BJ (cell line): ENCODE measurements at regions of chr14 and their contacts with region 1.

Region 1: GRCh38 chr14:75982266-75983018 is 647 bp upstream of the TGFB3 start:
- DNase-seq: no peak
- H3K4me3 ChIP-seq: peak overlapping the region; percentile 54
- H3K27me3 ChIP-seq: no peaks in the 10 kb centered on the region
- CTCF ChIP-seq: peak; percentile 72

Region 2: GRCh38 chr14:75702616-75703261 is 279.7 kb before region 1 on chr14:
- CTCF ChIA-PET with region 1: interaction called, 296 read pairs
- POLR2A ChIA-PET with region 1: interaction called, 4 read pairs
- DNase-seq: no peak
- H3K4me3 ChIP-seq: no peak overlapping the region
- H3K27me3 ChIP-seq: no peaks in the 10 kb centered on the region
- CTCF ChIP-seq: no peak

Region 3: DNA sequence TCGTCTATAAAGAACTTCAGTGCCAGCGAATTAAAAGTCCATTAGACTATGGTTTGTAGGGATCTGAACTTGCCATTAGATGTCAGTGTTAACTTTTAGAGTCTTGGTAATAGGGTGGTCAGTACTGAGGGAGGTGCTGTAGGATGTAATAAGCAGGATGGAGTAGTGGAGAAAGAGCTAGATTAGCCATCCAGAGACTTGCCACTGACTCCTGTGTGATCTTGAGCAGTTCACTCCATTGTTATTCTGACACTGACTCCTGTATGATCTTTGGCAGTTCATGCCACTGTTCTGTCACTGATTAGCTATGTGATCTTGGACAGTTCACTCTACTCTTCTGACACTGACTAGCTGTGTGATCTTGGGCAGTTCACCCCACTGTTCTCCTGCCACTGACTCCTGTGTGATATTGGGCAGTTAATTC is 187.8 kb before region 1 on chr14:
- CTCF ChIA-PET with region 1: interaction called, 105 read pairs
- POLR2A ChIA-PET with region 1: no interaction called
- DNase-seq: peak; percentile 10
- H3K4me3 ChIP-seq: no peak overlapping the region
- H3K27me3 ChIP-seq: no peaks in the 10 kb centered on the region
- CTCF ChIP-seq: peak; percentile 55

Region 4: GRCh38 chr14:75906676-75907280 is 75.7 kb before region 1 on chr14:
- CTCF ChIA-PET with region 1: interaction called, 160 read pairs
- POLR2A ChIA-PET with region 1: no interaction called
- DNase-seq: no peak
- H3K4me3 ChIP-seq: no peak overlapping the region
- H3K27me3 ChIP-seq: no peaks in the 10 kb centered on the region
- CTCF ChIP-seq: peak; percentile 85